Lower leg skin (tissue), 4 donors: ENCODE measurements at regions of chr7 and their contacts with region 1.

Region 1: DNA sequence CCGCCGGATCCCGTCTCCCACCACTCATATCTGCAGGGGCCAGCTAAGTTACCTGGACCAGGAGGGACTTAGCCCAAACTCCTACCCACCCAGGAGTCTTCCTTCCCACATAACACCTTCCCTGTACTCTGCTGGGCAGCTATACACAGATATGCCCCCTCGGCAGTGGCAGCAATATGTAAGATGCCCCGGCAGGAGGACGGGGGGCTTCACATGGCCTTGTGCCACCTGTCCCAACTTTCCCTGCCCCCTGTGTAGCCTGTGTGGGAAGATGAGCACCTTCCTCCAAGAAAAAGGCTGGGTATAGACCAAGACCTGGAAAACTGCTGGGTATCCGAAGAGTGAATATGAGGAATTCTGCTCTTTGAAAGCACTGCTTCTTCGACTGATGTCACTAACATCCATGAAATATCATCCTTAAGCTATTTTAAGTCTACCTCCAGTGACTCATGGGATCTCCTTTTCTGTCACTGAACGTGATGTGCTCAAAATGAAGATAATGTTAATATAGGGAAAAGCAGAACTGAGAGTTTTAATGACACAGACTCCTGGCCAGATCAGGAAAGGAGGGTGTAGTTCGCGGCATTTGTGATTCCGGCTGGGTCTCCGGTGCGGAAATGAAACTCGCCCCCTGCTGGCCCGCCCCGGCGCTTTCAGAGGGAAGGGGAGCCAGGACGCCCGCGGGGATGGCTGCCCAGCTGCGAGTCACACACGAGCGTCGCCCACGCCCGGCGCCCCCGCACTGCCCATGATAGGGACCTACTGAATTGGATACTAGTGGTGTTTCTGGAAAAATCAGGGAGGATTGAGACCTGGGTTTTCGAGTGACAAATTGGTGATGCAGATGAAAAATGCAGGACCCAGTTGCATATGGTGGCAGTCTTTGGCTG is 256.9 kb upstream of the NFE2L3 start:
- DNase-seq: peak; percentile 53 to 96
- H3K4me3 ChIP-seq: peak overlapping the region; percentile 10
- CTCF ChIP-seq: no peak
- POLR2A ChIP-seq: no peak

Region 2: GRCh38 chr7:26055241-26055640 is 160.1 kb after region 1 on chr7:
- intact Hi-C with region 1: loop called (anchors 5 kb)
- DNase-seq: no peak
- H3K4me3 ChIP-seq: no peak overlapping the region
- CTCF ChIP-seq: no peak
- POLR2A ChIP-seq: no peak

Region 3: GRCh38 chr7:26365077-26365900 is 470.1 kb after region 1 on chr7:
- intact Hi-C with region 1: loop called (anchors 5 kb)
- DNase-seq: peak in 1 of 2 donors; percentile 68
- H3K4me3 ChIP-seq: no peak overlapping the region
- CTCF ChIP-seq: peak in 1 of 3 donors; percentile 51
- POLR2A ChIP-seq: no peak